ENCODE measurements at regions of chr1 and their contacts with region 1.

Region 1: GRCh38 chr1:235415008-235415904 is 48.0 kb downstream of the TBCE start:
- DNase-seq: peak; percentile 74
- ATAC-seq: peak; percentile 87
- H3K4me3 Mint-ChIP-seq: no peak overlapping the region
- H3K27ac Mint-ChIP-seq: no peak overlapping the region
- H3K4me1 Mint-ChIP-seq: peaks cover 3% of the 10 kb centered on the region
- H3K27me3 Mint-ChIP-seq: no peaks in the 10 kb centered on the region
- CTCF ChIP-seq: peak; percentile 88

Region 2: GRCh38 chr1:235105051-235106043 is 309.9 kb before region 1 on chr1:
- CTCF ChIA-PET with region 1: interaction called, 20 read pairs
- POLR2A ChIA-PET with region 1: interaction called, 3 read pairs
- intact Hi-C with region 1: loop called (anchors 1 kb)
- DNase-seq: no peak
- ATAC-seq: peak; percentile 66
- H3K4me3 Mint-ChIP-seq: peak overlapping the region; percentile 61
- H3K27ac Mint-ChIP-seq: peak overlapping the region; percentile 79
- H3K4me1 Mint-ChIP-seq: peaks cover 42% of the 10 kb centered on the region
- H3K27me3 Mint-ChIP-seq: peaks cover 3% of the 10 kb centered on the region
- CTCF ChIP-seq: no peak

Region 3: DNA sequence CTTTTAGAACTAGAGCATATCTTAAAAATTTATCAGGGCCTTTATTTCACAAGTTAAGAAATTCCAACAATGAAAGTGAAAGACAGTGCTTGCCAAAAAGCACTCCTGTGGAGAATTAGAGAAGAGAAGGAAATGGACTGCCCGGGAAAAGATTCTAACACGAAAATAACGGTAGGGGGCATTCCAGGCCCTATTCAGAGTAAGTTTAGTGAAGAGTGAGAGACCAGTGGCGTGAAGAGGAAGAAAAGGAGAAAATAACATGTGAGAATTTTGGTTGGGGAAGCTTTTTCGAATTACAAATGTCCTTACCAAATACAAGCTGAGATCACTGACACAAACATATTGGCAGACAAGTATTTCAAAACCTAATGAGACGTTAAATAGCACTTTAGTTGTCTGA is 215.8 kb before region 1 on chr1:
- CTCF ChIA-PET with region 1: interaction called, 11 read pairs
- POLR2A ChIA-PET with region 1: no interaction called
- intact Hi-C with region 1: no loop called
- DNase-seq: no peak
- ATAC-seq: no peak
- H3K4me3 Mint-ChIP-seq: no peak overlapping the region
- H3K27ac Mint-ChIP-seq: no peak overlapping the region
- H3K4me1 Mint-ChIP-seq: peaks cover 3% of the 10 kb centered on the region
- H3K27me3 Mint-ChIP-seq: no peaks in the 10 kb centered on the region
- CTCF ChIP-seq: peak; percentile 23

Region 4: DNA sequence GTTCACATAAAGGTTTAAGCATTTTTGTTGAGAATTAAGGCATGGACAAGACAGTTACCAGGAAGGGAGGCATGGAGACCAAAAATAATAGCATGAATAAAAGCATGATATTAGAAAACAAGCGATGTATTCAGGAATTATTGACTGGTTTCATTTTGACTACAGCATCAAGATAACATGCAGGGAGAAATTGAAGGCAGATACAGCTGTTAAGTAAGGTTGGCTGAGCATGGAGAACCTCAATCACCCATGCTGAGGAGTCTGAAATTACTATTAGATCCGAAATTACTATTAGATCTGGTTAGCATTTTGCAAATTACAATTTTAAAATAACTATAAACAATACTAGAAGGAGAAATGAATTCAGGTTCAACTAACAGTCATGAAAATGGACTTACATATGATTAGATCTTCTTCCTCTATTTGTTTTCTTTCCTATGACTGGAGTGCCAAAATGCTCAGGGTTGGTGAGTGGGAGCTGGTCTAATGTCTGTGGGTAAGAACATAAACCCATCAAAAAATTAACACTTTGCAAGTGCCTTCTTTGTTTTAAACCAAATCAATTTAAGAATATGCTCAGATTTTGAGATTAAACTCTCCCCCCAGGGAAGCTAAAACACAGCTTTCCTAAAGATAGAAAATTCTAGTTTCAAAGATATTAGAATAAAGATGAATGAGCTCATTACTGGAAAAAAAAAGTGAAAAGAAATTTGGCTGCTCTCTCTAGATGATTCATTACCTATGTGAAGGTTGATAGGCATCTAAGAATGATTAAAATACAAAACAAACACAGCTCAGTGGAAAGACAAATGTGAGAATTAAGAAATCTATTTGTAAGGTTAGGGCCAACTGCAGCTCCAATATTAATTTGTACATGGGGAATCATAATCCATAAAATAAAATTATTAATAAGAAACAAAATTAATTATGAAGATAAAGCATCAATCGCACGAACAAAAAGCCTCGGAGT is 168.9 kb before region 1 on chr1:
- CTCF ChIA-PET with region 1: interaction called, 56 read pairs
- POLR2A ChIA-PET with region 1: no interaction called
- intact Hi-C with region 1: no loop called
- DNase-seq: no peak
- ATAC-seq: no peak
- H3K4me3 Mint-ChIP-seq: no peak overlapping the region
- H3K27ac Mint-ChIP-seq: peak overlapping the region; percentile 36
- H3K4me1 Mint-ChIP-seq: peaks cover 39% of the 10 kb centered on the region
- H3K27me3 Mint-ChIP-seq: no peaks in the 10 kb centered on the region
- CTCF ChIP-seq: no peak

Region 5: DNA sequence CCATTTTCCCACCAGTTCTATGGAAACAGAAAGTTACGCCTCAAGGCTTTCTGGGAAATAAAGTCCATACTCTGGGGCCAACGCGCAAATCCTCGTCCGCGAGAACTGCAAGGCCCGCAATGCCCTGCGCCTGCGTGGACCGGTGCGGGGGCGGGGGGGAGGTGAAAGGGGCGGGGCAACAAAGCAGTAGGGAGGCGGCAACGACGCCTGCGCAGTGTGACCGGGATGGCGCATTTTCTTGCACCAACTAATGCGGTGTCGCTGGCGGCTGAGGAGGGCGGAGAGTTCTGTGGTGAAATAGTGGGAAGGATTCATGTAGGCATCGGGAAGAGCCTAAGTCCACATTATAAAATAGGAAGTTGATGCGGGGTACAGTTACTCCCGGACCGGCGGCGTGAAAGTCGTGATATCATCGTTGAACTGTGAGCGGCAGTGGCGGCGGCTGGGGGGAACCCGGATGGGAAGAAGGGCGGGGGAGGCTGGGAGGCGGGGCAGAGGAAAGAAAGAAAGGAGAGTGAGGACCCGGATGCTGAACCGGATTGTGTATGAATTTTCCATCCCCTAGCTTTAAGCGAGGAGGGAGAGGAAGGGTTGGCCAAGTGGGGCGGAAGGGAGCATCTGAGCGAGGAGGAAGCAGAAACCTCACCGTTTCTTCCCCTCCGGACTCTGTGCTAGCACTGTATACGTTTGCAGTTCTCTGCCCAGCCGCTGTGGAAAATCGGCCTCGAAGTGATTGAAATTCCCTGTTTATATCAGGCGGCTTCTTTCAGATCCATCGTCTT is 86.7 kb before region 1 on chr1 and contains the start of gene GGPS1:
- CTCF ChIA-PET with region 1: interaction called, 18 read pairs
- POLR2A ChIA-PET with region 1: no interaction called
- intact Hi-C with region 1: loop called (anchors 5 kb)
- DNase-seq: peak; percentile 99
- ATAC-seq: peak; percentile 82
- H3K4me3 Mint-ChIP-seq: no peak within 1 kb of the TSS
- H3K27ac Mint-ChIP-seq: peak within 1 kb of the TSS; percentile 86
- H3K4me1 Mint-ChIP-seq: peaks cover 45% of the 10 kb centered on the region
- H3K27me3 Mint-ChIP-seq: no peaks in the 10 kb centered on the region
- CTCF ChIP-seq: no peak
- total RNA-seq, gene GGPS1: 35.4 to 37.8 TPM

Region 6: DNA sequence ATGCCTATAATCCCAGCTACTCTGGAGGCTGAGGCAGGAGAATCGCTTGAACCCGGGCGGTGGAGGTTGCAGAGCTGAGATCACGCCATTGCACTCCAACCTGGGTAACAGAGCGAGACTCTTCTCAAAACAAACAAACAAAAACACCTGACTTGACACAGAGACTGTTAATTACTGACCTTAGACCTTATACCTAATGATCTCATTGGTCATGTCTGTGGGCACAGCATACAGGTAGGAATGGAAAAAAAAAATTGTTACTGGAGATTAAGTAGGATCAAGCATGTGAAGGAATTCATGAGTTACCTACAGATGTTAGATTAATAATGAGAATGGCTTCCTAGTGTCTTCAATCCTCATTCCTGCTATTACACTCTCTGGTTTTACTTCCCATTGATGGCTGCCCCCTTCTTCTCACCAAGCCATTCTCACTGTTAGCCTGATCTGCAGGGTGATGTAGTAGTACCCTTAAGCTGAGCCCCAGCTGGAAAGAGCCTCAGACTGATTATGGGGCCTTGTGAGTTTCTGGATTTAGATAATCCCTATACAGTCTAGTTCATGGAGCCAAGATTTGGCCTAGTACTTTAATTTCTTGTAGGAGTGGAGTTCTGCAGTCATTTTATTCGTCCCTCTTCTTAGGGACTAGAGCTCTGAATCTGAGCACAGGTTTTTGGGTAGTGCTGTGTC is 39.2 kb before region 1 on chr1:
- CTCF ChIA-PET with region 1: interaction called, 18 read pairs
- POLR2A ChIA-PET with region 1: no interaction called
- intact Hi-C with region 1: no loop called
- DNase-seq: no peak
- ATAC-seq: no peak
- H3K4me3 Mint-ChIP-seq: no peak overlapping the region
- H3K27ac Mint-ChIP-seq: no peak overlapping the region
- H3K4me1 Mint-ChIP-seq: peaks cover 9% of the 10 kb centered on the region
- H3K27me3 Mint-ChIP-seq: no peaks in the 10 kb centered on the region
- CTCF ChIP-seq: no peak

Region 7: DNA sequence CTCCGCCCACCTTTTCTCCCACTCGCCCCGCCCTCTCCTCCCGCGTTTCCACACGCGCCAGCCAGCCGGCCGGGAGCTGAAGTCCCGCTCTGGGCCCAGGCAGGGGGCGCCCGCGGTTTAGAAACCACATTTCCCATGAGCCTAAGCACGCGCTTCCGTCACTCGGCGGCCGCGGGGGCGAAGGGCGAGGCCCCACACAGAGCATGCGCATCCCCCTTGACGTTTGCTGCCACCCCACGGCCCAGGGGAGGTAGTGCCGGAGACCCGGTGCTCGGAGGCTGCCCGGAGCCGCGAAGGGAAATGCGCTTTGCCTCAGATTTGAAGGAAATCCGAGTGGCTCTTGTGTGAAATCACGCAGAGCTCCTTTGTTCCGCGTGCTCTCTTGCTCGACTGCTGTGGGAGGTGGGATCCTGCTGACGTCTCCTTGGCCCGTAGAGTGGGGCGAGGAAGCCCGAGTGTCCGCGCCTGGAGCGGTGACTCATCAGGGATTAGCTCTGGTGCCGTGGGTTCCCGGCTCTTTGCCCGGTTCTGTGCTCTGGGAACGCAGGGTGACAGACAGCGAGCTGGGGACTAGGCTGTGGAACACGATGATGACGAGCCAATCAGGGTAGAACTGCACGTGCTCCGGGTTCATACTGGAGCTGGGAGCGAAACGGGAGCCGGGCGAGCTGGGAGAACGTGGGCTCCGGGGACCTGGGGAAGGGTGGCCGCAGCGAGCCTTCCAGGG is 89.4 kb after region 1 on chr1:
- CTCF ChIA-PET with region 1: interaction called, 10 read pairs
- POLR2A ChIA-PET with region 1: interaction called, 3 read pairs
- intact Hi-C with region 1: no loop called
- DNase-seq: peak; percentile 99
- ATAC-seq: peak; percentile 93
- H3K4me3 Mint-ChIP-seq: peak overlapping the region; percentile 89
- H3K27ac Mint-ChIP-seq: peak overlapping the region; percentile 98
- H3K4me1 Mint-ChIP-seq: peaks cover 30% of the 10 kb centered on the region
- H3K27me3 Mint-ChIP-seq: no peaks in the 10 kb centered on the region
- CTCF ChIP-seq: peak; percentile 92